GM12878 (cell line): ENCODE measurements at regions of chr5 and their contacts with region 1.

Region 1: DNA sequence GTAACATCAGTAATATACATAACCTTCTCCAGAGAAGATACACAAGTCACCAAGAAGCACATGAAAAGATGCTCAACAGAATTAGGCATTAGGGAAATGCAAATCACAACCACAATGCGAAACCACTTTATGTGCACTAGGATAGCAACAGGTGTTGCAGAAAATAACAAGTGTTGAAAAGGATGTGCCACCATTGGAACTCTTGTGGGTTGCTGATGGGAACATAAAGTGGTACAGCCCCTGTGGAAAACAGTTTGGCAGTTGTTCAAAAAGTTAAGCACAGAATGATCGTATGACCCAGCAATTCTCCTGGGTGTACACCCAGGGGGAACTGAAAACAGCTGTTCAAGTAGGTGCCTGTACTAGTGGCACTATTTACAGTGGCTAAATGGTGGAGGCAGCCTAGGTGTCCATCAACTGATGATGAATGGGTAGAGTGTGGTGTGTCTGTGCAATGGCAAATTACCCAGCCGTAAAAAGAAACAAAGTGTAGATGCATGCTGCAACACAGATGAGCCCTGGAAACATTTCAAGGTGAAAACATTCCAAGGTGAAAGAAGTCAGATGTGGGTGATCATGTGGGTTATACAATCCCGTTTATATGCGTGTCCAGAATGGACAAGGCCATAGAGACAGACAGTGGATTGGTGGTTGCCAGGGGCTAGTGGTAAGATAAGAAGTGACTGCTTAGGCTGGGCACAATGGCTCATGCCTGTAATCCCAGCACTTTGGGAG is 27.2 kb downstream of the CCDC69 start:
- DNase-seq: peak; percentile 95
- ATAC-seq: peak; percentile 98
- H3K4me3 ChIP-seq: no peak overlapping the region
- H3K27ac ChIP-seq: peak overlapping the region; percentile 20; the same call in 1 of the 2 replicates
- H3K4me1 ChIP-seq: peaks cover 17% of the 10 kb centered on the region
- H3K27me3 ChIP-seq: no peaks in the 10 kb centered on the region
- CTCF ChIP-seq: no peak
- EP300 ChIP-seq: peak; percentile 60 to 69; a peak in 2 of 4 replicates
- POLR2A ChIP-seq: no peak
- RAD21 ChIP-seq: no peak

Region 2: GRCh38 chr5:151023651-151024050 is 173.1 kb before region 1 on chr5:
- CTCF ChIA-PET with region 1: no interaction called
- POLR2A ChIA-PET with region 1: no interaction called
- RAD21 ChIA-PET with region 1: no interaction called
- SMC1A ChIA-PET with region 1: no interaction called
- in situ Hi-C with region 1: no loop called
- intact Hi-C with region 1: no loop called
- DNase-seq: no peak
- ATAC-seq: no peak
- H3K4me3 ChIP-seq: no peak overlapping the region
- H3K27ac ChIP-seq: no peak overlapping the region
- H3K4me1 ChIP-seq: no peaks in the 10 kb centered on the region
- H3K27me3 ChIP-seq: no peaks in the 10 kb centered on the region
- CTCF ChIP-seq: no peak
- EP300 ChIP-seq: no peak
- POLR2A ChIP-seq: 0 out of 2 replicates have a peak, but pooled peaks have one; percentile 5
- RAD21 ChIP-seq: no peak

Region 3: GRCh38 chr5:151208481-151208914 is 11.8 kb after region 1 on chr5:
- CTCF ChIA-PET with region 1: interaction called, 19 read pairs
- POLR2A ChIA-PET with region 1: interaction called, 20 read pairs
- RAD21 ChIA-PET with region 1: interaction called, 24 read pairs
- SMC1A ChIA-PET with region 1: interaction called, 18 read pairs
- in situ Hi-C with region 1: no loop called
- intact Hi-C with region 1: no loop called
- DNase-seq: no peak
- ATAC-seq: no peak
- H3K4me3 ChIP-seq: no peak overlapping the region
- H3K27ac ChIP-seq: no peak overlapping the region
- H3K4me1 ChIP-seq: peaks cover 33% of the 10 kb centered on the region
- H3K27me3 ChIP-seq: no peaks in the 10 kb centered on the region
- CTCF ChIP-seq: no peak
- EP300 ChIP-seq: no peak
- POLR2A ChIP-seq: no peak
- RAD21 ChIP-seq: no peak